Left cardiac atrium (tissue), 4 donors: ENCODE measurements at regions of chr1 and their contacts with region 1.

Region 1: DNA sequence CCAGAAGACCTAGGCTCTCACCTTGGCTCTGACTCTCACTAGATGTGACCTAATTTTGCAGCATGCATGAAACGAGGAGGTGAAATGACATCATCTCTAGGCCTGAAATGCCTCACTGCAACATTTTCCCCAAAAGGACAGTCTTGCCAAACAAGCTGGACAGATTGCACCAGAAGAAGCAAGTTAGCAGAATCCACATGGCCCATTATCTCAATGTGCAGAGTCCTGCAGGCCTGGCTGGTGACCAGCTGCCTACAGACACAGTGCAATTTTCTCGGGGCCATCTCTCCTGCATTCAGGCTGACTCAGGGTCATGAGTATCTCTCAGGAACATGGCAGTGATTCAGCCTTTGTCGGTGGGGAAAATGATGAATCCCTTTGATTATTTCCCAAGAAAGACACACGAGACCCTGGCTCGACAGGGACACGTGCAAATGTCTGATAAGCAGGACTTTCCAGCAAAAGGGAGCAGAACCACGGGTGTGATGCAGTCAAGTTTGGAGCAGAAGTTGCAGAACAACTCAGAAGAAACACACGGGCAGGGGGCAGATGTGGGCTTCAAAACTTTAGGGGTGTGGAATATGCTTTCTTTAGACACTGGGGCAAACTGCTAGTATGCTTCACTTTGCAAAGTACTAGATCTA is 38.7 kb downstream of the TRIM67 start:
- DNase-seq: no peak
- ATAC-seq: peak in 1 of 2 donors; percentile 11

Region 2: GRCh38 chr1:230781594-230781993 is 418.9 kb before region 1 on chr1:
- intact Hi-C with region 1: loop called in 1 of 2 experiments (anchors 10 kb)
- DNase-seq: no peak
- ATAC-seq: no peak

Region 3: DNA sequence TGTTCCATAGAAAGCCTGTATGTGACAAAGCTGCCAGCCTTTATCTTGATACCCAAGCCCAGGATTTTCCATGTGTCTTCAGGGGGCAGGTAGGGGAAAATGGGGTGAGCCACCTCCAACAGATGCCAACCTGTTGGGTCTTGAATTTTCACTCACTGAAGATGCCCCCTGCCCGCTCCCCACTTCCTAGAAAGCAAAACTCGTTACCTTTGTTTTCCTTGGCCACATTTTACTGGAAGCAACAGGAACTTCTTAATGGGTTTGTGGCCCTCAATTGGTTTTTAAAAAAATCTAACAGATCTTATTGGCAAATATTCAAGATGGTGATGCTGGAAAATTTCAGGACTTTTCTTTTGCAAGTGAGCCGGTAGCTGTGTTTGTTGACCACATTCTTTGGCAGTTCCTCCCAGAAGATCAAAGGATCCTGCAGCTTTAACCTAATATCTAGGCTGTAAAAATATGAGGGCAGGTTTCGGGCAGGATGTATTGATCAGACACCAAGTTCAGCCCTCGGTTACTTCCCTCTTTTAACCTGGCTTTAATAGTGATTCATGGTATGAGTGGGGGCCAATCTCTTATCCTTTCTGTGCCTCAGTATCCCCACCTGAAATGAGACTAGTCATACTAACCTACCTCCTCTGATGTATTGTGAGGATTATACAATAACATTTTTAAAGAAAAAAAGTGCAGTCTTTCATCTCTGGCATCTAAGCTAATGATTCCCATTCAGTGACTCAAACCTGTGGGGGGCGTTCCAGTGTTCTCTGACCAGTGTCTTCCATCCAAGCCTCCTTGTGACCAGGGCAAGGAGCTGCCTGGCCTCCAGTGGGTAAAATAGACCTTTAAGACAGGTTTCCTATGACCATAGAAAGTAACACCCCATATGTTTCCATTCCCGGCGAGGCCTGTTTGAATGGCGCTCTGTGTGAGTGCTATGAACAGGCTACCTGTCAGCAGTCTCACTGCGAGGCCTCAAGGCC is 19.2 kb after region 1 on chr1:
- intact Hi-C with region 1: no loop called
- DNase-seq: no peak
- ATAC-seq: no peak